ENCODE measurements at regions of chr7 and their contacts with region 1.

Region 1: GRCh38 chr7:112898432-112899290 is 108.5 kb upstream of the TMEM168 start:
- DNase-seq: no peak
- ATAC-seq: peak; percentile 83

Region 2: DNA sequence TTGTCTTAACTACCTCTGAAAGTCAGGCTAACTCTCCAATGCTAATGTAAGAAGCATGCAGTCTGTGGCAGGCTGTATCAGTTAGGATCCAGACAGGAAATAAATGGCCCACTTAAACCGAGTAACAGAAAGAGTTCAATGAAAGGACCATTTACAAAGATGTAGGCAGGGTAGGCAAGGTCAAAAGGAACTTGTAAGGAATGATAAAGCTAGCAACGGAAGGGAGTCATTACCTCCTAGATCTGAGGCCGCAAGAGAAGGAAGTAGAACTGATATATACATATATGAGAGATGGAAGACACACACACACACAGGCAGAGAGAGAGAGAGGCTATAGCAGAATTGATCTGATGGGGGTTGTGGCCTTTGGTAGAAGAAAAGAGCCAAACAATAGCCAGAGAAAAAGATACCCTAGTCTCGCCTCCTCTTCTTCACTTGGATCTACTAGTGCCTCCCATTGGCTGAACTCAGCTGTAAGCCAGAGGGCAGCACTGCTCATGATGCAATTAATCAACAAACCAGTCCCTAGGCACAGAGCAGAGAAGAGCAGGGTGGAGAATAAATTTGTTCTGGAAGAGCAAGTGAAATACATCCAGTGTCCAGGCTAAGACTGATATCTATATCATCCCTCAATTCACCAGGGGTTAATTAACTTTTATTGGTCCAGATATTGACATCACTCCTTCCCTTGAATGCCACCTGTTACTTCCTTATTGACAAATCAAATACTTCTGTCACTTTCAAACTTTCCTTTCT is 326.6 kb before region 1 on chr7:
- intact Hi-C with region 1: loop called (anchors 10 kb)
- DNase-seq: no peak
- ATAC-seq: no peak

Region 3: DNA sequence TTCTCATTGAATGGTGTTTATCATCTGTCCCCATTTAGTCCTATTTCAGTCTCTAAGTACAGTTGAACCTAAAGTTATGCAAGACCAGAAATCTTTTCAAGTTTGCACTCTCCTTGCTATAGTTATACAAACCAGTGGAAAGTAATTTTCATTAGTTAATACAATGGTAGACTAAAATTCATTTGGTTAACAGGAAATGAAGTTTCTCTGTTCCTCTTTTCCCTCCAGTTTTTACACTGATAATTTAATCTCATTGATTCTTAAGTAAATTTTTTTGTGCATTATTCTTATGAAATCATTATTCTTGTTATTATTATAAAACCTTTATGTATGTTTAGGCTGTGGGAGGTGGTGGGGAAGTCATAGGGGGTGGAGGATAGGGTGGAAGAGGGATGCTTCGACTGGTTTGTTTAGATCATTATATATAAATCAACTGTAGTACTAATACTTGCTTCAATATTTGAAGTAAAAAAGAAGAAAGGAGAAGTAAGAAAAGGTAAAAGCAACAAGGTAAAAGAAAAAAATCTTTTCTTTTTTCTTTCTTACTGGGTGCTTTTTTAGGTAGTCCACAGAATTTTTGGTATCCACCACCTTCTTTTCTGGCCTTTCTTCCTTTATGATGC is 83.9 kb after region 1 on chr7:
- intact Hi-C with region 1: no loop called
- DNase-seq: no peak
- ATAC-seq: no peak

Measured in left ventricle myocardium superior (tissue), 1 donor.